Activated T-helper 1 cell treated with anti-CD3 and anti-CD28 coated beads, Interleukin-12 subunit alpha, Interleukin-12 subunit beta, Interleukin-2, Interleukin-4 antibody, amounts not matched to agents 30 ng/mL and 10 ng/mL and 1 ng/mL, durations not matched to agents 14 hours and 24 hours and 36 hours (primary cell): ENCODE measurements at regions of chrX and their contacts with region 1.

Region 1: DNA sequence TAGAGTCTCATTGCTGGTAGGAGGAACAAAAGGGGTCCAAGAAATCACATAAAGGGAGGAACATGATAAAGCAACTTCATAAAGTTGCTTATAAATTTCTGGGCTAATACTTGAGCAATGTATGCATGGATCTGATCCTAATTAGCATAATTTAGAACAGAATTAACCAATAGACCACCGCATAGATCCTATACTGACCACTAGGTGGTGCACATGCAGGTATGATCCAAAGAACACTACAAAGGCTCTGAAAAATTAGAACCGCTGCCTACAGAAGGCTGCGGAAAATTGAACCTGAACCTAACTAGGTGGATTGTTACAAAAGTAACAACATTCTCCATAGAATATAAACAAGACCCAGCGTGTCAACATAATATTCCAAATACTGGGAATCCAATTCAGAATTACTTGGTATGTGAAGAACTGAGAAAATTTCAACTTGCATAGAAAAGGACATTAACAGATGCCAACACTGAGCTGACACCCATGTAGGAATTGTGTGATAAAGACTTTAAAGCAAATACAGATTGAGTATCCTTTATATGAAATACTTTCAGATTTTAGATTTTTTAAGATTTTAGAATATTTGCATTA is 23.3 kb downstream of the BRCC3 start:
- DNase-seq: peak; percentile 4
- H3K4me3 Mint-ChIP-seq: no peak overlapping the region
- H3K27ac Mint-ChIP-seq: no peak overlapping the region
- H3K4me1 Mint-ChIP-seq: no peaks in the 10 kb centered on the region
- H3K27me3 Mint-ChIP-seq: no peaks in the 10 kb centered on the region

Region 2: GRCh38 chrX:155819966-155820491 is 725.5 kb after region 1 on chrX:
- intact Hi-C with region 1: loop called (anchors 1 kb)
- DNase-seq: peak; percentile 3
- H3K4me3 Mint-ChIP-seq: no peak overlapping the region
- H3K27ac Mint-ChIP-seq: no peak overlapping the region
- H3K4me1 Mint-ChIP-seq: no peaks in the 10 kb centered on the region
- H3K27me3 Mint-ChIP-seq: peaks cover 6% of the 10 kb centered on the region